ENCODE measurements at regions of chr2 and their contacts with region 1.

Region 1: DNA sequence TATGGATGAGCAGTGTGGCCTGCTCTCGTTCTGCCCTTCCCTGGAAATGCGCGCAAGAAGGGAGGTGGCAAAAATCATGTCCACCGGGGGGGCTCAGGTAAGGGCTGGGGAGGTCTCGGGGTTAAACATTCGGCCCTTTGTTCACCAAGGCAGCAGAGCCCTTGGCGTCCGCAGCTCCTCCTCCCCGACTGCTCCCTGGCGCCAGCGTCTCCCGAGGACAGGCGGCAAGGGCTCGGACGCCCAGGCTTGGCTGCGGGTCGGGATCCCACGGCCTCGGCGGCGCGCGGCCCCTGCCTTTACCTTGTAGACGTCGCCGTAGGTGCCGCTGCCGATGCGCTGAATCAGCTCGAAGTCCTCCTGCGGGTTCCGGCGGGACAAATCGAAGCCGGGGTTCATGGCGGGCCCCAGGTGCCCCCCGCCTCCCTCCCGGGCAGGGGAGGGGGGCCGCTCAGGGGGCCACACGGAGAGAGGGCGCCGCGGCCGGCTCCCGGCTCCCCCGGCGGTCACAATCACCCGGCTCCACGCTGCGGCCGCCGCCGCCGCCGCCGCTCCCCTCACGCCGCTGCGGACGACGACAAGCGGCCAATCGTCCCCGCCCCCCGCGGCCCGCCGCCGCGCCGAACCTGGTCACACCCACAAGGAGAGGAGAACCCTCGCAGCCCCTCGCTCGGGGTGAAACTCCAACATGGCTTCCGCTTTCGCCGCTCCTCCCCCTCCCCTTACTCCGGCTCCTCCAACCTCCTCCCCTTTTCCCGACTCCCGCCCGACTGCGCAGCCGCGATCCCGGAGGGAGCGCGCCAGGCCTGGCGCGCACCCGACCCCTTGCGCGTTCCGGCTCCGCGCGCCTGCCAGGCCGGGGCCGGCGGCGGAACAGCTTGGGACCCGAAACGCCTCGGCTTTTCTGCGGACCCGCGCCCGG is at the start of gene MAP4K3:
- DNase-seq: peak; percentile 93 to 96
- ATAC-seq: peak; percentile 88 to 90 (median 88)
- H3K4me3 ChIP-seq: peak within 1 kb of the TSS; percentile 85
- H3K27ac ChIP-seq: peak within 1 kb of the TSS; percentile 93
- H3K4me1 ChIP-seq: peaks cover 60% of the 10 kb centered on the region
- H3K27me3 ChIP-seq: no peaks in the 10 kb centered on the region
- CTCF ChIP-seq: no peak
- total RNA-seq, gene MAP4K3: 31.0 to 47.7 (median 37.4) TPM

Region 2: DNA sequence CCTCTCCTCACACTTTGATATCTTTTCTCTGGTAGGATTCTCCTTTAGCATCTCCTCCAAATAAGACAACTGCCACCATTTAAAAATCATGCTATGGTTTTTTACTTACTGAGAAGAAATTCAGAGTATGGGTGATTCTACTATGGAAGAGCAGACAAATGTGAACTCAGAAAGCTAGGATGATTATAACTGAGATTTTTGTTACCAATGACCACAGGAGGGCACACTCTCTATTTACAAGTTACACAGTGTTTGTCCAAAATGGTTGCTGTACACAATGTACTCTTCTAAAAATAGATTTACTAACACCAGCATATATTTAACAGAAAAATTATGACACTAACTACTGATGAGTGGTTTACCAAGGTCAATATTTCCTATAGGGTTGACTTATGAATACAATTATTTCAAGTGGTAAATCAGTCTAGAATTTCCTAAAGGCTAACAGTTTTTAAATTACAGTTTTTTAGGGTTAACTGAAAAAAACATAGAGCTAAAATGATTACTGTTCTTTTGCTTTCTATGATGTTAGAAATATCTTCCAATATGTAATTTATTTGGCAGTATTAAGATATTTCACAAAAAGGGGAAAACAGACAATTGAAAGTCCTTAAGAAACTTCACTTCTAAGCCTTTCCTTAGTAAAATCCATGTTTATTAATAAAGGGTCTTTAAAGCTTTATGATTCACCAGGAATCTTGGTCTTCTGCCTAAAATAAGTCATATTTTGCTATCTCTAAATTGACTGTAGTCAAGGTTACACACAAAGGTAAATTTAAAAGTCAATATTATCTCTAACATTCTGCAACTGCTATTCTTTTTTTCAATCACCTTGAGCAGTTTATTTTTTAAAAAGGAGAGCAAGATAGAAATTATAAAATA is 57.0 kb before region 1 on chr2:
- intact Hi-C with region 1: loop called (anchors 1 to 5 kb)
- DNase-seq: no peak
- ATAC-seq: peak; percentile 82 to 90 (median 86)
- H3K4me3 ChIP-seq: peak overlapping the region; percentile 38
- H3K27ac ChIP-seq: peak overlapping the region; percentile 82
- H3K4me1 ChIP-seq: peaks cover 83% of the 10 kb centered on the region
- H3K27me3 ChIP-seq: no peaks in the 10 kb centered on the region
- CTCF ChIP-seq: peak; percentile 64

Region 3: DNA sequence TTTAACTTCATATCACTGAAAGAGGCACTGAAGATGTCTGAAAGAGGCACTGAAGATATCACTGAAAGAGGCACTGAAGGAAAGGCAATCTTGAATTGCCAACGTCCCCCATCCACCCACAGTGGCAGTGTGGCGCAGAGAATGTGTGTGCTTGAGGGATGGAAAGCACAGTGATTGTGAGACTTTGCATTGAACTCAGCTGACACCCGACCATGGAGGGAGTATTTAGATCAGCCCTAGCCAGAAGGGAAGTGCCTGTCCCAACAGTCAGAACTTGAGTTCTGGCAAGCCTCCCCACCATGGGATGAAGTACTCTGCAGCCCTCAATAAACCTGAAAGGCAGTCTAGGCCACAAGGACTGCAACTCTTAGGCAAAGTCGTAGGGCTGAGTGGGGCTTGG is 33.5 kb before region 1 on chr2:
- intact Hi-C with region 1: loop called (anchors 1 to 5 kb)
- DNase-seq: peak in 1 of 2 donors; percentile 15
- ATAC-seq: peak; percentile 52 to 66 (median 58)
- H3K4me3 ChIP-seq: no peak overlapping the region
- H3K27ac ChIP-seq: peak overlapping the region; percentile 76
- H3K4me1 ChIP-seq: peaks cover 93% of the 10 kb centered on the region
- H3K27me3 ChIP-seq: no peaks in the 10 kb centered on the region
- CTCF ChIP-seq: no peak

Region 4: GRCh38 chr2:39476524-39476923 is 39.7 kb after region 1 on chr2:
- intact Hi-C with region 1: no loop called
- DNase-seq: no peak
- ATAC-seq: no peak
- H3K4me3 ChIP-seq: no peak overlapping the region
- H3K27ac ChIP-seq: no peak overlapping the region
- H3K4me1 ChIP-seq: no peaks in the 10 kb centered on the region
- H3K27me3 ChIP-seq: no peaks in the 10 kb centered on the region
- CTCF ChIP-seq: no peak

Region 5: GRCh38 chr2:39492095-39492590 is 55.3 kb after region 1 on chr2:
- intact Hi-C with region 1: loop called in 1 of 2 experiments (anchors 5 kb)
- DNase-seq: no peak
- ATAC-seq: peak; percentile 85 to 94 (median 90)
- H3K4me3 ChIP-seq: no peak overlapping the region
- H3K27ac ChIP-seq: peak overlapping the region; percentile 79
- H3K4me1 ChIP-seq: peaks cover 31% of the 10 kb centered on the region
- H3K27me3 ChIP-seq: no peaks in the 10 kb centered on the region
- CTCF ChIP-seq: no peak

Region 6: DNA sequence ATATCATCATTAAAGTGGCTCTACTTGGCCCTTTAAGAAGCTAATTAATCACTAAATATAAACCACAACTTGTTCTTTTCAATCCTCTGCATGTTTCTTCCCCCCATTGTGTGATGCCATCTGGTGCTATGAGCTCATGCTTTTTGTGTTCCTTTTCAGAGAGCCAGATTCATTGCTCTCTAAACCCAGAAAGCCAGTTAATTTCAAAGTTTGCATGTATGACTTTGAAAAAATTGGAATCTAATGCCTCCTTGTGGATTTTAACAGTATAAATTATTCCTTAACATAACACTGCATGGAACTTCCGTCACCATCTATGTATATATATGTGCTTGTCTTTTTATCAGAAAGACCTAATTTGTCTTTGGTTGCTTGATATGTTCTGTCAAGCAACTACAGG is 260.0 kb after region 1 on chr2:
- intact Hi-C with region 1: loop called in 1 of 2 experiments (anchors 5 kb)
- DNase-seq: no peak
- ATAC-seq: peak; percentile 21 to 71 (median 44)
- H3K4me3 ChIP-seq: no peak overlapping the region
- H3K27ac ChIP-seq: peak overlapping the region; percentile 65
- H3K4me1 ChIP-seq: peaks cover 30% of the 10 kb centered on the region
- H3K27me3 ChIP-seq: no peaks in the 10 kb centered on the region
- CTCF ChIP-seq: peak; percentile 39